ENCODE measurements at regions of chr7 and their contacts with region 1.

Region 1: GRCh38 chr7:139075031-139075652 is 34.4 kb downstream of the ZC3HAV1 start:
- DNase-seq: peak; percentile 71 to 78
- ATAC-seq: peak; percentile 92 to 94
- H3K4me3 ChIP-seq: no peak overlapping the region
- H3K27ac ChIP-seq: peak overlapping the region; percentile 46 to 73; a peak in 5 of 6 replicates
- H3K4me1 ChIP-seq: peaks cover 7% of the 10 kb centered on the region; the same call in 1 of the 3 replicates
- CTCF ChIP-seq: peak; percentile 91
- EP300 ChIP-seq: no peak
- POLR2A ChIP-seq: no peak
- RAD21 ChIP-seq: peak; percentile 69 to 71

Region 2: DNA sequence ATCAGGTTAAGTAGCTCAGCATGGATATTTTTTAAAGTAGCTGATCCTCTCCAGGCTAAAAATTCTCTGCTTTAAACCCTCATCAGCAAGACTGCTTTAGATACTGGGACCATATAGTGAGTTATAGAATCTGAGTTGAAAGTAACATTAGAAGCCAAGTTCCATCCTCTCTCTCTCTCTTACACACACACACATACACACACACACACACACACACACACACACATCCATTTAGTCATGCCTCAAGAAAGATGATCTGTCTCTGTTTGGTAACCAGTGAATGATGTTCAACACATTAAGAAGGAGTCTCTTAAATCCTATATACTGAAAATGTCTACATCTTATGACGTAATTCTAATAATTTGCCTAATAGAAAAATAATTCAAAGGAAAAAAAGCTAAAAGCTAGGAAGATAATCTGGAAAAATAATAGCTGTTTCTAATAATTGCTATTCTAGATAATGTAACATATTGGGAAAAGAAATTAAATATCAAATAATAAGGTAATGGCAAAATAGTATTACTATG is 260.3 kb before region 1 on chr7:
- CTCF ChIA-PET with region 1: no interaction called
- POLR2A ChIA-PET with region 1: no interaction called
- DNase-seq: peak in 1 of 2 experiments; percentile 10
- ATAC-seq: no peak
- H3K4me3 ChIP-seq: no peak overlapping the region
- H3K27ac ChIP-seq: no peak overlapping the region
- H3K4me1 ChIP-seq: no peaks in the 10 kb centered on the region
- CTCF ChIP-seq: no peak
- EP300 ChIP-seq: no peak
- POLR2A ChIP-seq: no peak
- RAD21 ChIP-seq: no peak

Region 3: GRCh38 chr7:139016931-139017511 is 58.1 kb before region 1 on chr7:
- CTCF ChIA-PET with region 1: interaction called, 35 read pairs
- POLR2A ChIA-PET with region 1: no interaction called
- DNase-seq: peak; percentile 80 to 95
- ATAC-seq: peak; percentile 97
- H3K4me3 ChIP-seq: no peak overlapping the region
- H3K27ac ChIP-seq: no peak overlapping the region
- H3K4me1 ChIP-seq: no peaks in the 10 kb centered on the region
- CTCF ChIP-seq: peak; percentile 78
- EP300 ChIP-seq: no peak
- POLR2A ChIP-seq: no peak
- RAD21 ChIP-seq: peak; percentile 74 to 79

Region 4: DNA sequence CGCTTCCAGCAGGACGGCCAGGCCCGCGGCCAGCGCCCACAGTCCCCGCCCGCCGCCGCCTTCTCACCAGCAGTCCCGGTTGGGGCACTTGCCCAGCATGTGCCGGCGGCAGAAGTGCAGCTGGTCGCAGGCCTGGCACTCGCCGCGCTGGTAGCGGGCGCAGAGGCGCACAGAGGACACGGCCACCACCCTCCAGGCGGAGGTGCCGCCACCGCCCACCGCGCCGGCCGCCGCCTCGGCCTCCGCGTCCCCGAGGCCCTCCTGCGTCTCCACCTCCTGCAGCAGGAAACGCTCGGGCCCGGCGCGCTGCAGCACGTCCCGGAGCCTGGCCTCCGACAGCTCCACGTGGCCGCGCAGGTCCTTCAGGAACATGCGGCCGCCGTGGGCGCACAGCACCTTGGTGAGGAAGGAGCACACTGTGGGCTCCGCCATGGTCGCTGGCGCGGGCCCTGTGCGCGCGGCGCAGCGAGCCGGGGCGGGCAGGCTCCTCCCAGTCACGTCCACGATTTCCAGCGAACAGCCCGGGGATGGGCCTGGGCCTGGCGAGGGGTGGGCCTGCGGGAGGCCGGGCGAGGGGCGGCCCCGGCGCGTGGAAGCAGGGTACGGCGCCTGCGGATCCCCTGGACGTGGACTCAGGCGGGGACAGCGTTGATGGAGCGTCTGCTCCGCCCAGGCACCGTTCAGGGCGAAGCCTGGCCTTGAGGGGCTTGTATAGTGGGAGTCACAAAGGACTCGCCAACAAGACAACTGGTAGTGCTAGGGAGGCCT is 39.4 kb before region 1 on chr7 and contains the start of gene ZC3HAV1L:
- CTCF ChIA-PET with region 1: interaction called, 31 read pairs
- POLR2A ChIA-PET with region 1: no interaction called
- DNase-seq: peak; percentile 84 to 90
- ATAC-seq: peak; percentile 95 to 97
- H3K4me3 ChIP-seq: peak within 1 kb of the TSS; percentile 77
- H3K27ac ChIP-seq: peak within 1 kb of the TSS; percentile 94 to 98
- H3K4me1 ChIP-seq: peaks cover 11% of the 10 kb centered on the region
- CTCF ChIP-seq: no peak
- EP300 ChIP-seq: no peak
- POLR2A ChIP-seq: peak; percentile 94
- RAD21 ChIP-seq: peak in 1 of 2 experiments; percentile 25; a peak in 1 of 5 replicates
- polyA plus RNA-seq, gene ZC3HAV1L: 15.6 and 23.4 TPM in 2 replicates

Region 5: GRCh38 chr7:139058943-139059342 is 16.2 kb before region 1 on chr7:
- CTCF ChIA-PET with region 1: interaction called, 58 read pairs
- POLR2A ChIA-PET with region 1: no interaction called
- DNase-seq: no peak
- ATAC-seq: no peak
- H3K4me3 ChIP-seq: no peak overlapping the region
- H3K27ac ChIP-seq: no peak overlapping the region
- H3K4me1 ChIP-seq: no peaks in the 10 kb centered on the region
- CTCF ChIP-seq: no peak
- EP300 ChIP-seq: no peak
- POLR2A ChIP-seq: no peak
- RAD21 ChIP-seq: no peak

Region 6: DNA sequence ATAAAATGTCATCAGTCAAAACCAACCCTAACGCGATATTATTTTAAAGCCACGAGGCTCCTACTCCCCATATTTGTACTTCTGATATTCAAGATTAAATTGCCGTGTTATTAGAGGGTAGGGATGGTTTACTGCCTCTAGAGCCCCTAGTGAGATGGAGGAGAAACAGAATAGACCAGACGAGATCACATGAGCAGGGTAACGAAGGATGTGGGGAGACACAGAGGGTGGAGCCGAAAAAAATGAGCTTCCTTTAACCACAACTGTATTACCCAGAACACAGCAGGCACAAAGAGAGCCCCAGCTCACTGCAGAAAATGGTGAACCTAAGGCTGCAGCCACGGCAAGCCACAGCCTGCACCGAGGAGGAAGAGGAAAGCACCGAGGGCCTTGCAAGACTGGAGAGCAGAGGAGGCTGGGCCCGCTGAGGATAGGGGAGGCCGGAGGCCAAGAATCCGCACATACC is 20.1 kb after region 1 on chr7:
- CTCF ChIA-PET with region 1: interaction called, 16 read pairs
- POLR2A ChIA-PET with region 1: no interaction called
- DNase-seq: no peak
- ATAC-seq: peak in 1 of 2 experiments; percentile 43; a peak in 3 of 6 replicates
- H3K4me3 ChIP-seq: no peak overlapping the region
- H3K27ac ChIP-seq: no peak overlapping the region
- H3K4me1 ChIP-seq: peaks cover 16% of the 10 kb centered on the region; the same call in 2 of the 3 replicates
- CTCF ChIP-seq: no peak
- EP300 ChIP-seq: no peak
- POLR2A ChIP-seq: no peak
- RAD21 ChIP-seq: no peak

Region 7: GRCh38 chr7:139271718-139272628 is 196.8 kb after region 1 on chr7:
- CTCF ChIA-PET with region 1: no interaction called
- POLR2A ChIA-PET with region 1: no interaction called
- DNase-seq: no peak
- ATAC-seq: no peak
- H3K4me3 ChIP-seq: no peak overlapping the region
- H3K27ac ChIP-seq: no peak overlapping the region
- H3K4me1 ChIP-seq: no peaks in the 10 kb centered on the region
- CTCF ChIP-seq: no peak
- EP300 ChIP-seq: no peak
- POLR2A ChIP-seq: no peak
- RAD21 ChIP-seq: no peak